ENCODE measurements at regions of chr11 and their contacts with region 1.

Region 1: GRCh38 chr11:125111343-125112207 is at the start of gene TMEM218:
- DNase-seq: peak; percentile 98 to 99 (median 99)
- H3K4me3 ChIP-seq: peak within 1 kb of the TSS; percentile 70 to 95 (median 89)
- H3K27ac ChIP-seq: peak within 1 kb of the TSS; percentile 71 to 83
- H3K4me1 ChIP-seq: peaks cover 9 to 14% (median 12%) of the 10 kb centered on the region in 4 experiments
- H3K27me3 ChIP-seq: no peaks in the 10 kb centered on the region

Region 2: GRCh38 chr11:124277804-124278203 is 833.8 kb before region 1 on chr11:
- CTCF ChIA-PET with region 1: no interaction called
- POLR2A ChIA-PET with region 1: no interaction called
- DNase-seq: peak; percentile 37 to 66 (median 66)
- H3K4me3 ChIP-seq: no peak overlapping the region
- H3K27ac ChIP-seq: no peak overlapping the region
- H3K4me1 ChIP-seq: peaks cover 5 to 39% (median 27%) of the 10 kb centered on the region in 4 experiments
- H3K27me3 ChIP-seq: no peaks in the 10 kb centered on the region

Region 3: DNA sequence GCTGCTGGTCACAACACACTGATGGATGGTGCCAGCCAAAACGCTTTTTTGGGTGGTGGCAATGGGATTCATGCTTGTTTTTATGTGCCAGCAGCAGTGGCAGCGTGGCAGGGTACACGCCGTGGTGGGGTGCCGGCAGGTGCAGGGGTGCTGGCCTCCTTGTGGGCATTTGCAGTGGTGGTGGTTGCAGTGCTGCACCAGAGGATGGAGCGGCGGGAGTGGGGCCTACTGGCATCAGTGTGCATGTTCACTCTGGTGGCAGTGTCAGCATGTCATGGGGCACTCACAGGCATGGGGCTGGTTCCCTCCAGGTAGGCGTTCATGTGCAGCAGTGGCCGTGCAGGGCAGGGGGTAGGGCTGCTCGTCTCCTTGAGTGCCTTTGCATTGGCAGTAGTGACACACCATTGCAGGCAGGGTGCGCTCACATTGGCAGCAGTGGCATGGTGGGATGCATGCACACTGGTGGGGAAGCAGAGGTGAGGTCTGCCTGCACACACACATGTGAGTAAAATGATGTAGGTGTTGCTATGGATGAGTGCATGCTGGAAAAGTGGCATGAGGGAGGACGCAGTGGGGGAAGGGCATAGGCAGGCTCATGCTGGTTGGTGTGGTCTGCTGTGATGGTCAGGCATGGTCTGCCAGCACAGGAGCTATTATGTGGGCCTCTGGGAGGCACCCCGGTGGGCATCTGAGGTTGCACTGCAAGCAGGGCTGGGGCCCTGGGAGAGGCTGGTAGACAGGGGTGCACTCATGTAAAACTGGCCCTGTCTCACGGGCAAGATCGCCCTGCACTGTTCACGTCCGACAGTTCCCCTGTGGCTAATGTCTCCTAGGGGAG is 127.7 kb before region 1 on chr11:
- CTCF ChIA-PET with region 1: no interaction called
- POLR2A ChIA-PET with region 1: no interaction called
- DNase-seq: no peak
- H3K4me3 ChIP-seq: no peak overlapping the region
- H3K27ac ChIP-seq: no peak overlapping the region
- H3K4me1 ChIP-seq: no peaks in the 10 kb centered on the region
- H3K27me3 ChIP-seq: no peaks in the 10 kb centered on the region

Region 4: DNA sequence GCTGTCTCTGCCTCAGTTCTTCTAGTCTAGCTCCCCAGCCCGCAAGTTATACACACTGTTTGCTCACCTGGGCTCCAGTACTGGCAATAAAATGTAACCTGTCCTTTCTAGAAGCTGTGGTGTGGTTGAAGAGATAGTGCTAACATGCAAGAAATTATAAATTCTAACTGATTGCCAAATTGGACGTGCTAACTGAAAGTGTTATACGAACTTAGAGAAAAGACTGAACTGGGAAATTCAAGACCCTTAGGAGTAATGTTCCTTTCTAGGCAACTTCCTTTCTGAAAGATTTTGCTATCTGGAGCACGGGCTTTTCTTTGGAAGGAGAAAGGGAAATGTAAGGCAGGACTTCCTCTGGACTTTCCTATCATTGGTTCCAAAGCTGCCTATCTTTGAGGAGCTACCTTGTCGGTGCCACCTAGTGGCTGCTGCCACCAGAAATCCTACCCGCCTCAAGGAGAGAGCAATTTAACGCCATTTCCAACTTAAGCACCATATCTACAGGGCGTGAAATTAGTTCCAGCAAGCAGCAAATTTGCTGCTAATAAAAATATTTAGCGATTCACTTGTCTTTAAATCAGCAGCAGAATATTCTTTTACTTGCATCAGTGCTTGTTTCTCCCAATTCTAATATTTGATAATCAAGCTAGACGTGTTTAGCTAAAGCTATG is 12.5 kb after region 1 on chr11:
- CTCF ChIA-PET with region 1: interaction called, 12 read pairs
- POLR2A ChIA-PET with region 1: interaction called, 3 read pairs
- DNase-seq: peak in 2 of 3 donors; percentile 48 to 50
- H3K4me3 ChIP-seq: peak overlapping the region in 2 of 7 experiments; percentile 23 to 50
- H3K27ac ChIP-seq: no peak overlapping the region
- H3K4me1 ChIP-seq: peaks cover 0 to 14% (median 6%) of the 10 kb centered on the region in 4 experiments
- H3K27me3 ChIP-seq: peaks cover 0 to 29% (median 20%) of the 10 kb centered on the region in 5 experiments

Region 5: GRCh38 chr11:125141686-125142535 is 30.3 kb after region 1 on chr11:
- CTCF ChIA-PET with region 1: interaction called, 12 read pairs
- POLR2A ChIA-PET with region 1: no interaction called
- DNase-seq: peak; percentile 31 to 55 (median 51)
- H3K4me3 ChIP-seq: no peak overlapping the region
- H3K27ac ChIP-seq: no peak overlapping the region
- H3K4me1 ChIP-seq: no peaks in the 10 kb centered on the region
- H3K27me3 ChIP-seq: peaks cover 0 to 33% (median 19%) of the 10 kb centered on the region in 5 experiments